AG04449 (cell line): ENCODE measurements at regions of chr17 and their contacts with region 1.

Region 1: DNA sequence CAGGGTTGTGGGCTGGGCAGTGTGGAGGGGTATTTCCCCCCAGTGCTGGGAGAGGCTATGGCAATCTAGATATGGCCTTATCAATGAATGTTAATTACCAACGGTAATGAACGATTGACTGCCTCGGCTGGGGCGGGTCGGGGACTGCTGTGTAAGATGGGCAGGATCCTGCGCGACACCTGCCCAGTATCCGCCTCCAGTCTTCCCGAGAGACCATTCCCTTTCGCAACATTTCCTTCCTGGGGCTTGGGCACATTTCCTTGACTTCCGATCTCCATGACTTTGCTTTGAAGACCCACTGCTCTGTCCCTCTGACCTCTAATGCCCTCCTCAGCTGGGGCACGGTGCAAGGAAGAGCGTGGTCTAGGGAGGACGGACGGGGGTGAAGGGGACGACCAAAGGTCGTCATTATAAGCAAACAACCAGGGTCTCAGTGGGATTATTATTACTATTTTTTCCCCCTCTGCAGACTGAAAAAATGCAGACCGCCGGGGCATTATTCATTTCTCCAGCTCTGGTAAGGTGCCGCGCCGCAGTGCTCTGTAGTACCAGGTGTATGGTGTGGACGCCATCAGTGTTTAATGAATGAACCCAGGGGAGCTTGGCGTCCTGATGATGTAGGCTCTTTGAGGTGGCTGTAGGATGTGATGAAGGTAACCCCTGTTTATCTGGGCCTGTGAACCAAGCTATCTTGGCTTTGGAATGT is 506 bp downstream of the ATP5MC1 start:
- DNase-seq: no peak
- H3K4me3 ChIP-seq: peak overlapping the region; percentile 97
- CTCF ChIP-seq: no peak

Region 2: GRCh38 chr17:48908047-48908843 is 15.2 kb after region 1 on chr17 and contains the start of gene UBE2Z:
- CTCF ChIA-PET with region 1: interaction called, 8 read pairs
- POLR2A ChIA-PET with region 1: interaction called, 12 read pairs
- DNase-seq: peak; percentile 71
- H3K4me3 ChIP-seq: peak within 1 kb of the TSS; percentile 74
- CTCF ChIP-seq: peak; percentile 15